ENCODE measurements at regions of chr5 and their contacts with region 1.

Region 1: GRCh38 chr5:176660860-176661641 is 13.8 kb downstream of the TSPAN17 start:
- DNase-seq: peak; percentile 59 to 87 (median 76)
- ATAC-seq: peak; percentile 75 to 83
- H3K4me3 Mint-ChIP-seq: peak overlapping the region in 4 of 10 donors; percentile 16 to 63 (median 50)
- H3K27ac Mint-ChIP-seq: peak overlapping the region in 5 of 10 donors; percentile 1 to 87 (median 62)
- H3K4me1 Mint-ChIP-seq: peaks cover 22 to 35% (median 29%) of the 10 kb centered on the region in 4 donors
- H3K27me3 Mint-ChIP-seq: peaks cover 6 to 28% (median 14%) of the 10 kb centered on the region in 5 donors

Region 2: DNA sequence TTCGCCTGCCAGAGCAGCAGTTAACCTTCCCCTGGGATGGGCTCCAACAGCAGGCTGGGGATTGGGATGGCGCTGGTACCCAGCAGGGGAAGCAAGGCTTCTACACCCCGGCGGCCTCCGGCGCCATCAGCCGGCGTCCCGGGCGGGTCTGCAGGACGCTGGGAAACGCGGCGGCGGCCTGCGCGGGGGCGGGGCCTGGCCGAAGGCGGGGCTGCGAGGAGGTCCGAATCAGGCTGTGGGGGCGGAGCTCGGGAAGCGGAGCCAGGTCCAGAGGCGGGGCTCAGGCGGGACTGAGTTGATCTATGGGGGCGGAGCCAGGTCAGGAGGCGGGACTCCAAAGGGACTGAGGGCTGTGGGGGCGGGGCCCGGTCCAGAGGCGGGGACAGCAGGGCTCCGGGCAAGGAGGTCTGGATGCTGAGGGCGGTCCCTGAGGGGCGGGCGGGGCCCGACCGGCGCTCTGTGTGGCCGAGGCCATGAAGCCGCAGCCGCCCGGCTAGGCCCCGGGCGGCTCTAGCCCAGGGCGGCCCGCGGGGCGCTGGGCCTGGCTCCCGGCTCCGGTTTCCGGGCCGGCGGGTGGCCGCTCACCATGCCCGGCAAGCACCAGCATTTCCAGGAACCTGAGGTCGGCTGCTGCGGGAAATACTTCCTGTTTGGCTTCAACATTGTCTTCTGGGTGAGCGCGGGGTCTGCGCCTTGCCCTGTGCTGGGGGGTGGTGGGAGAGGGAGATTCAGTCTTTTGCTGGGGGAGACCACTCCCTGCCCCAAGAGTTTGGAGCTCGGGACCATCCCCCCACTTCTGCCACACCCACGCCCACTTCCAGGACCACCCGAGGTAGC is 13.8 kb before region 1 on chr5 and contains the start of gene TSPAN17:
- POLR2A ChIA-PET with region 1: interaction called, 23 read pairs
- DNase-seq: peak; percentile 87 to 98 (median 93)
- ATAC-seq: peak; percentile 83 to 84
- H3K4me3 Mint-ChIP-seq: peak within 1 kb of the TSS; percentile 80 to 94 (median 90)
- H3K27ac Mint-ChIP-seq: peak within 1 kb of the TSS; percentile 80 to 96 (median 91)
- H3K4me1 Mint-ChIP-seq: peaks cover 35 to 61% (median 56%) of the 10 kb centered on the region in 4 donors
- H3K27me3 Mint-ChIP-seq: no peaks in the 10 kb centered on the region
- polyA plus RNA-seq, gene TSPAN17: 13.5 to 26.0 (median 18.4) TPM

Region 3: DNA sequence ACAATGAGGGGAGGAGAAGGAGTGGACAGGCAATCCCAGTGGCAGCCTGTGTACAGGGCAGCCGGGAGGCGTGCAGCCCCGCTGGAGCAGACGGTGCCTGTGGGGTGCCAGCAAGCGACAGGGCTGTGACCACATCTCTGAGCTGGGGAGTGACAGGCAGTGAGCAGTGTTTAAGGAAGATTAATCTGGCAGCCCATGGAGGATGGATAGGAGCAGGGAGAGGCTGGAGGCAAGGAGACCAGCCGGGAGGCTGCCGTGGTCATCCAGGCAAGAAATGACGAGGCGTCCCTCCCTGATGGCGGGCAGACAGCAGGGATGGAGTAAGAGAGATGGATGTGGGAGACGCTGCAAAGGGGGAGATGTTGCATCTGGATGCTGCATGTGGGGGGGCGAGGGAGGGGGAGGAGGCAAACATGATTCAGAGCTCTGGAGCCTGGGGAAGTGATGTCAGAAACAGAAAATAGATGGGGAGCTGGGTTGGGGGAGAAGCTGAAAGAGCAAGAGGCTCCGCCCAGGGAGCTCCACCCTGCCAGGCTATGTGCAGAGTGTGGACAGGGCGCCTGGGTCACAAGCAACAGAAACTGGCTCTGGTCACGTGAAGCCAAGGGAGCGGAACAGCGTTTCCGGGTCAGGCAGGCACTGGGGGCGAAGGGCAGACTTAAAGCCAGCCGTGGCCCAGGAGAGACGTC is 161.9 kb after region 1 on chr5:
- POLR2A ChIA-PET with region 1: no interaction called
- DNase-seq: no peak
- ATAC-seq: no peak
- H3K4me3 Mint-ChIP-seq: no peak overlapping the region
- H3K27ac Mint-ChIP-seq: peak overlapping the region in 1 of 10 donors; percentile 56
- H3K4me1 Mint-ChIP-seq: peaks cover 7 to 11% (median 9%) of the 10 kb centered on the region in 4 donors
- H3K27me3 Mint-ChIP-seq: peaks cover 26 to 59% (median 44%) of the 10 kb centered on the region in 5 donors

Measured in naive thymus-derived CD8-positive, alpha-beta T cell (primary cell).